Activated T-helper 1 cell treated with anti-CD3 and anti-CD28 coated beads, Interleukin-12 subunit alpha, Interleukin-12 subunit beta, Interleukin-2, Interleukin-4 antibody, amounts not matched to agents 30 ng/mL and 10 ng/mL and 1 ng/mL, durations not matched to agents 14 hours and 24 hours and 36 hours (primary cell): ENCODE measurements at regions of chr11 and their contacts with region 1.

Region 1: GRCh38 chr11:33773987-33774735 is at the start of gene FBXO3:
- DNase-seq: peak; percentile 80
- H3K4me3 Mint-ChIP-seq: peak within 1 kb of the TSS; percentile 94
- H3K27ac Mint-ChIP-seq: peak within 1 kb of the TSS; percentile 91
- H3K4me1 Mint-ChIP-seq: peaks cover 37% of the 10 kb centered on the region
- H3K27me3 Mint-ChIP-seq: peaks cover 29% of the 10 kb centered on the region
- total RNA-seq, gene FBXO3: 18.6 and 24.3 TPM in 2 replicates

Region 2: DNA sequence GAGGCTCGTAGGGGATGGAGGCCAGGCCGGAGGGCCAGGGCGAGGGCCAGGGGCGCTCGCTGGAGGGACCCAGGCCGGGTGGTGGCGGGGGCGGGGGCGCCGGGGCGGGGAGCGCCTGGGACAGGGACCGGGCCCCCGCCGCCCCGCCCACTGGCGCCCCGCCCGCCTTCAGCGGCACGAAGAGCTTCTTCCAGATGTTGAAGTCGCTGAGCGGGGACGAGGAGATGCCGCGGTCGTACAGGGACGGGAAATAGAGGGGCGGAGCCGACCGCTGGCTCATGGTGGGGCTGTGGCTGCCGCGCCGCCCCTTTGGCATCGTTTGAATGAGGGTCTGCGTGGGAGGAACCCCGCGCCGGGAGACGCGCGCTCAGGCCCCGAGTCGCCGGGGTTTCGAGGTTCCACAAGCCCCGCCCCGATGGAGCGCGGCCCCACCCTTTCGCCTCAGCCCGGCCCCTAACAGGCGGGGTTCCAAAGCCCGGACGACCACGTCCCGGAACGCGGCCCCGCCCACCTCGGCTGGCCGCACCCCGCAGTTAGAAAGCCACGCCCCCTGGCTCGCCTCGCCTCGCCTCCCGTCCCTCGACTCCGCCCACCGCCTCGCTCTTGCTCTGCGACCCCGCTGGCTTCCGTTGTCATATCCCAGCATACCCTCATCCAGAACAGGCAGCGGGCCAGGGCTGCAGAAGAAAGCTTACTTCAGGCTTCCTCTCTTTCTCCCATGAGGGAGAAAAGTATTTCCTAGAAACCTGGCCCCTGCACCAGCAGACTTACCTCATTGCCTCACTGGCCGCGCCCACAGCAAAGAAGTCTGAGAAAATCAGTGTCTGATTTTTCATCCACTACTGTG is 73.5 kb before region 1 on chr11 and contains the start of gene C11orf91:
- intact Hi-C with region 1: loop called (anchors 1 kb)
- DNase-seq: peak; percentile 94
- H3K4me3 Mint-ChIP-seq: peak within 1 kb of the TSS; percentile 84
- H3K27ac Mint-ChIP-seq: peak within 1 kb of the TSS; percentile 78
- H3K4me1 Mint-ChIP-seq: peaks cover 29% of the 10 kb centered on the region
- H3K27me3 Mint-ChIP-seq: peaks cover 22% of the 10 kb centered on the region
- total RNA-seq, gene C11orf91: 0.23 TPM in 1 of 2 replicates, not detected in the other

Region 3: DNA sequence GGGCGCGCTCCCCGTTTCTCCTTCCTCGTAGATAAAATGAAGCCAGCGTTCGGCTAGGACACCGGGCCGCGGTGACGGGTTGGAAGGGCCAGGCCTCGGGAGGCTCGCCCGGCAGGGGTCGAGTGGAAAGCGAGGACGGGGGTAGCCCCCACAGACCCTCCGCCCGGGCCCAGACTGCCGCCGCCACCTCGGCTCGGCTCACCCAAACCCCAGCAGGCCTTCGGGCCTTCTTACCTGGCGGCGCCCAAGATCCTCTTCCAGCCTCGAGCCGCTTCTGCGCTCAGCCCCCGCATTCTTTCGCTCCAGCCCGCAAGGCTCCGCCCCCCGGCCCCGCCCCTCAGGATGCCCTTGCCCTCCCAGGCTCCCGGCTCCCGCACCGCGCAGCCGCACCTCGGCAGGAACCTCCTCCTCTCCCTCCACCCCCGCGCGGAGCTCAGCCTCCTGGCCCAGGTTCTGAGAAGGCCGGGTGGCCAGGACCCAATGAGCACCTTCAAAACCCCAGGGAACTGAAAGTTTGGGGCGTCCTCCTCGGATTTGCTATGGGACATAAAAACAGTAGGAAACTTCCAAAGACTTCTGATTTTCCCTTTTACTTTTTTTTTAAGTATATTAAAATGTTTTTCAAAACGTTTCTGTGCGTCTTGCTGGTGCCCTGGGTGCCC is 37.9 kb before region 1 on chr11 and contains the start of gene CD59:
- intact Hi-C with region 1: loop called (anchors 1 kb)
- DNase-seq: peak; percentile 83
- H3K4me3 Mint-ChIP-seq: peak within 1 kb of the TSS; percentile 87
- H3K27ac Mint-ChIP-seq: peak within 1 kb of the TSS; percentile 89
- H3K4me1 Mint-ChIP-seq: peaks cover 37% of the 10 kb centered on the region
- H3K27me3 Mint-ChIP-seq: peaks cover 3% of the 10 kb centered on the region
- total RNA-seq, gene CD59: 140 and 143 TPM in 2 replicates

Region 4: DNA sequence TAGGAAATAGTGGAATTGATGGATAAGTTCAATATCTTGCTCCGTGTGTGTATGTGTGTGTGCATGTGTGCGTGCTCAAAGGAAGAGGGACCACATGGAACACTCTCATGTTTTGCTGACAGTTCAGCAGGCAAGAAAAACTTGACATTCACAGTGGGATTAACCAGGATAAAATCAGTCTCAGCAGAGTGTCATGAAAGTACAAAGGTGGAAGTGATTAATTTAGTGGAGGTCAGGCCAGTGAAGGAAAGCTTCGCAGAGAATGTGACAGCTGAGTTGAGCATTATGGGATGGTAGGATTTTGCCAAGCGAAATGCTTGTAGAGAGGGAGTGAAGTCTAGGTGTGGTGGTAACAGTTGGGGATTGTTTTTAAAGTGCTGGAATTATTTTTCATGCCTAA is 15.9 kb after region 1 on chr11:
- intact Hi-C with region 1: no loop called
- DNase-seq: no peak
- H3K4me3 Mint-ChIP-seq: no peak overlapping the region
- H3K27ac Mint-ChIP-seq: no peak overlapping the region
- H3K4me1 Mint-ChIP-seq: peaks cover 8% of the 10 kb centered on the region
- H3K27me3 Mint-ChIP-seq: peaks cover 33% of the 10 kb centered on the region